GM12878 (cell line): ENCODE measurements at regions of chr3 and their contacts with region 1.

Region 1: GRCh38 chr3:122427857-122428471 is 12.1 kb upstream of the WDR5B start:
- DNase-seq: no peak
- ATAC-seq: peak; percentile 77
- H3K4me3 ChIP-seq: no peak overlapping the region
- H3K27ac ChIP-seq: no peak overlapping the region
- H3K4me1 ChIP-seq: no peaks in the 10 kb centered on the region
- H3K27me3 ChIP-seq: no peaks in the 10 kb centered on the region
- CTCF ChIP-seq: no peak
- EP300 ChIP-seq: no peak
- POLR2A ChIP-seq: no peak
- RAD21 ChIP-seq: no peak

Region 2: DNA sequence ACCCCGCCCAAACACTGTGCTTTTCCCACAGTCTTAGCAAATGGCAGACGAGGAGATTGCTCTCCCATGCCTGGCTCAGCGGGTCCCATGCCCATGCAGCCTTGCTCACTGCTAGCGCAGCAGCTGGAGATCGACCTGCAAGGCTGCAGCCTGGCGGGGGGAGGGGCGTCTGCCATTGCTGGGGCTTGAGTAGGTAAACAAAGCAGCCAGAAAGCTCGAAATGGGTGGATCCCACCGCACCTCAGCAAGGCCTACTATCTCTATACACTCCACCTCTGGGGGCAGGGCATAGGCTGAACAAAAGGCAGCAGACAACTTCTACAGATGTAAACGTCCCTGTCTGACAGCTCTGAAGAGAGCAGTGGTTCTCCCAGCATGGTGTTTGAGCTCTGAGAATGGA is 15.1 kb after region 1 on chr3:
- CTCF ChIA-PET with region 1: interaction called, 4 read pairs
- POLR2A ChIA-PET with region 1: interaction called, 11 read pairs
- RAD21 ChIA-PET with region 1: no interaction called
- SMC1A ChIA-PET with region 1: interaction called, 3 read pairs
- in situ Hi-C with region 1: no loop called
- intact Hi-C with region 1: no loop called
- DNase-seq: no peak
- ATAC-seq: no peak
- H3K4me3 ChIP-seq: no peak overlapping the region
- H3K27ac ChIP-seq: no peak overlapping the region
- H3K4me1 ChIP-seq: no peaks in the 10 kb centered on the region
- H3K27me3 ChIP-seq: no peaks in the 10 kb centered on the region
- CTCF ChIP-seq: no peak
- EP300 ChIP-seq: no peak
- POLR2A ChIP-seq: no peak
- RAD21 ChIP-seq: no peak